CD4-positive, alpha-beta memory T cell (primary cell): ENCODE measurements at regions of chr1 and their contacts with region 1.

Region 1: GRCh38 chr1:31984419-31985347 is 29.0 kb upstream of the KHDRBS1 start:
- DNase-seq: peak in 2 of 5 donors; percentile 20 to 50
- H3K4me3 ChIP-seq: peak overlapping the region in 1 of 2 donors; percentile 21
- H3K4me3 Mint-ChIP-seq: peak overlapping the region in 6 of 8 donors; percentile 45 to 79 (median 57)
- H3K27ac ChIP-seq: peak overlapping the region; percentile 67
- H3K27ac Mint-ChIP-seq: peak overlapping the region; percentile 85 to 97 (median 94)
- H3K4me1 ChIP-seq: peaks cover 61% of the 10 kb centered on the region
- H3K4me1 Mint-ChIP-seq: peaks cover 41 to 71% (median 55%) of the 10 kb centered on the region in 4 donors
- H3K27me3 ChIP-seq: no peaks in the 10 kb centered on the region
- H3K27me3 Mint-ChIP-seq: no peaks in the 10 kb centered on the region

Region 2: GRCh38 chr1:32013386-32014198 is 28.9 kb after region 1 on chr1 and contains the start of gene KHDRBS1:
- CTCF ChIA-PET with region 1: interaction called, 4 read pairs
- POLR2A ChIA-PET with region 1: interaction called, 40 read pairs
- intact Hi-C with region 1: no loop called
- DNase-seq: peak; percentile 98 to 99 (median 99)
- H3K4me3 ChIP-seq: peak within 1 kb of the TSS; percentile 89 to 100
- H3K4me3 Mint-ChIP-seq: peak within 1 kb of the TSS; percentile 89 to 99 (median 98)
- H3K27ac ChIP-seq: peak within 1 kb of the TSS; percentile 95
- H3K27ac Mint-ChIP-seq: peak within 1 kb of the TSS; percentile 97 to 99 (median 98)
- H3K4me1 ChIP-seq: peaks cover 37% of the 10 kb centered on the region
- H3K4me1 Mint-ChIP-seq: peaks cover 20 to 38% (median 30%) of the 10 kb centered on the region in 4 donors
- H3K27me3 ChIP-seq: no peaks in the 10 kb centered on the region
- H3K27me3 Mint-ChIP-seq: no peaks in the 10 kb centered on the region
- total RNA-seq, gene KHDRBS1: 114 to 122 TPM

Region 3: DNA sequence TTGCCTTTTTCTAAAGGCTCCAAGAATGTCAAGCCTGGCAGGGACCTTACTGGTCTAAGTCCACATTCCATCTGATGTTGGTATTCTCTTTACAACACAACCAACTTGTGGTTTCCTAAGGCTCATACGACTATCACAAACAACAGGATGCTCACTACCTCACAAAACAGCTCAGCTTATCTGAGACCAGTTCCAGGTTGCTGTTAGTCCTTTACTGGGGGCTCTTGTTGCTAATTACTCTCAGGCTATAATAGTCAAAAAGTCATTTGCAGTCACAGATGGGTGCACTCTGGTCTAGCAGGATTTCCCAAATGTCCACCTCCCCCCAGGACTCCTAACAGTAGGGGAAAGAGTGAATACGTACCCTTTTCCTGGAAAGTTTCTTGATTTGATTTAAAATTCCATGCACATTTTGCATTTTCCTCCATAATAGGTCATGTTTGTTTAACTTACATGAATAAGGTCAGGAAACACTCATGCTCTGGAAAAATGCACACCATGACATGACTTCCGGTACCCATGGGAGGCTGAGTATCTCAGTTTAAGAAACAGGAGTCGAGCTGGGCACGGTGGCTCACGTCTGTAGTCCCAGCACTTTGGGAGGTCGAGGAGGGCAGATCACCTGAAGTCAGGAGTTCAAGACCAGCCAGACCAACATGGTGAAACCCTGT is 282.4 kb after region 1 on chr1:
- CTCF ChIA-PET with region 1: no interaction called
- POLR2A ChIA-PET with region 1: no interaction called
- intact Hi-C with region 1: no loop called
- DNase-seq: peak in 3 of 5 donors; percentile 37 to 50 (median 48)
- H3K4me3 ChIP-seq: no peak overlapping the region
- H3K4me3 Mint-ChIP-seq: peak overlapping the region; percentile 74 to 92 (median 85)
- H3K27ac ChIP-seq: peak overlapping the region; percentile 42
- H3K27ac Mint-ChIP-seq: peak overlapping the region; percentile 82 to 99 (median 98)
- H3K4me1 ChIP-seq: peaks cover 82% of the 10 kb centered on the region
- H3K4me1 Mint-ChIP-seq: peaks cover 42 to 71% (median 54%) of the 10 kb centered on the region in 4 donors
- H3K27me3 ChIP-seq: no peaks in the 10 kb centered on the region
- H3K27me3 Mint-ChIP-seq: no peaks in the 10 kb centered on the region